ENCODE measurements at regions of chr4 and their contacts with region 1.

Region 1: DNA sequence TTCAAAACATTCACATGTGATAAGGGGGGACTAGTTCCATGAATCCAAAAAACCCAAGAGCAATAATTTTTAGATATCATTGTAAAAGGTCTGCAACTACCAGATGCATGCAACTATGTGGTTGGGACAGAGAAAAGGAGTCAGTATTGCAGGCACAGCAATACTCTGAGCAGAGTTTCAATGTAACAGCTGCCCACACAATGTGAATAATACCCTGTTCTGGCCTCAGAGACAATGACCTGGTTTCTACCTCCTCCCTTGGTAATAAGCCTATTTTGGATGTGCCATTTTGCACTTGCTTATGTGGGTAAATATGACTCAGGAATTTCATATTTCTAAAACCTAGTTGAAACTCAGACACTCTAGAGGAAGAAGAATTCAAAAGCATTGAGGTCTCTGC is 194.8 kb upstream of the RASGEF1B start:
- DNase-seq: peak; percentile 18
- ATAC-seq: peak; percentile 98
- H3K4me3 Mint-ChIP-seq: no peak overlapping the region
- H3K27ac Mint-ChIP-seq: peak overlapping the region; percentile 63
- H3K4me1 Mint-ChIP-seq: peaks cover 12% of the 10 kb centered on the region
- H3K27me3 Mint-ChIP-seq: no peaks in the 10 kb centered on the region

Region 2: GRCh38 chr4:81378386-81378785 is 288.1 kb before region 1 on chr4:
- CTCF ChIA-PET with region 1: no interaction called
- POLR2A ChIA-PET with region 1: no interaction called
- intact Hi-C with region 1: no loop called
- DNase-seq: no peak
- ATAC-seq: no peak
- H3K4me3 Mint-ChIP-seq: no peak overlapping the region
- H3K27ac Mint-ChIP-seq: no peak overlapping the region
- H3K4me1 Mint-ChIP-seq: no peaks in the 10 kb centered on the region
- H3K27me3 Mint-ChIP-seq: peaks cover 14% of the 10 kb centered on the region

Region 3: DNA sequence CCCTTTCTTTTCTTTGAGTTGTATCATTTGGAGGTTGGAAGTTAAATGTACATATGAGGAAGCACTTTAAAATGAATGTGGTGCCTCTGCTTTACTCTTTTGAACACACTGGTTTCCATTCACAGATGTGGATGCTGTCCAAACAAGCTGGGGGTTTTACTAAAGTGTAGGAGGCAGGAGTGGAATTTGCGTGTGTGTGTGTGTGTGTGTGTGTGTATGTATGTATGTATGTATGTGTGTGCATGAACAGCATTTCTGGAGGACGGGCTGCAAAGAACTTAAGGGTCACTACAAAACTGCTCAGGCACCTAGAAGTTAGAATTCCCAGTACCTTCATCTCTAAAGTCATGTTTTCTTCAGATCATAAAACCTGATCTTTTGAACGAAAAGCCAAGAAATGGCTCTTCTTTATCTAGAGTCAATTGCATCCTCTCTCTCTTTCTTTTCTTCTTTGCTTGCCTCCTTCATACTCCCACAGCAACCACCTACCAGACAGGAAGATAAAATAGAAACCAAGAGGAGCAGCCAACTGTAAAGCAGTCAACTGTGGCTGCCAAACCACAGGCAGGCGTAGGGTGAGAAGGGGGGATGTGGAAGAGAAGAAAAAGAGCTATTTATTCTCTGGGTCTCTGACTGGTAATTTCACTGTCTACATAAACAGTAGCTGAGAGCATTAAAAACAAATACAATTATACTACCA is 17.8 kb before region 1 on chr4:
- CTCF ChIA-PET with region 1: interaction called, 4 read pairs
- POLR2A ChIA-PET with region 1: interaction called, 3 read pairs
- intact Hi-C with region 1: loop called in 1 of 2 experiments (anchors 2 kb)
- DNase-seq: peak; percentile 65
- ATAC-seq: peak; percentile 46
- H3K4me3 Mint-ChIP-seq: peak overlapping the region; percentile 26
- H3K27ac Mint-ChIP-seq: peak overlapping the region; percentile 26
- H3K4me1 Mint-ChIP-seq: peaks cover 60% of the 10 kb centered on the region
- H3K27me3 Mint-ChIP-seq: no peaks in the 10 kb centered on the region